ENCODE measurements at regions of chr3 and their contacts with region 1.

Region 1: DNA sequence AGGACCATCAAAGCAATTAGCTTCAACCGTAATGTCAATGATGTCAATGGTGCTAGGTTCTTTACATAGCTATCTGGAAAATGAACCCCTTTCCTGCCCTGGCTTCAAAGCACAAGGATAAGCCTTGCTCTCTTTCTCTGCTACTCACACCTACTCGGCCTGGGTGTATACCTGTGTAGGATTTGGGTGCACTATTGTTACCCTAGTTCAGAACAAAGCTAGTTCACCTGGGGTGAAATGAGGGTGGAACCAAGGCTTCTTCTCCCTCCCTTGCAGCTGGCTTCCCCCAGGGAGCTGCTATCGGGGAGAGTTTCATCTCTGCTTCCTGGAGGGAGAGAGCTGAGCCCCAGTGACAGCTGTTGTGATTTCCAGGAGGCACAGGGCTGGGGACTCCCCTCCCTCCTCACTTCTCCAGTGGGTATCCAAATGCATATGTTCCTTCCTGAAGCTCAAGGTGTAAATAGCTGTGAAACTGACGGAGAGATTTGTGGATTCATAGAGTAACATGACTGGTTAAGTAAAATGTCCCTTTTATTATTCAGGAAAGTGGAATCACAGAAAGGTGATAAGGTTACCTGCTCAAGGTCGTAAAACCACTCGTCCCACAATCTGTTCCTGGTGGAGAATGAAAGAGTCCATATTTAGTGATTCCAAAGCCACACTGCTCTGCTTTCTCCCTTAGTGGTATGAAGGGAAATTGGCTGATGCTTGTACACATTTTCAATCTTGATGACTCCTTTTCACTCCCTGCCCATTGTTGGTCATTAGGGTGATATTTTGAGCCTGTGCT is 11.8 kb upstream of the C3orf70 start:
- DNase-seq: no peak
- ATAC-seq: no peak
- H3K4me3 ChIP-seq: no peak overlapping the region
- H3K27ac ChIP-seq: no peak overlapping the region
- H3K4me1 ChIP-seq: no peaks in the 10 kb centered on the region
- H3K27me3 ChIP-seq: peaks cover 11 to 37% of the 10 kb centered on the region in 2 experiments
- CTCF ChIP-seq: no peak
- EP300 ChIP-seq: no peak
- POLR2A ChIP-seq: no peak
- RAD21 ChIP-seq: no peak

Region 2: GRCh38 chr3:185114756-185115155 is 49.9 kb before region 1 on chr3:
- CTCF ChIA-PET with region 1: no interaction called
- POLR2A ChIA-PET with region 1: no interaction called
- in situ Hi-C with region 1: no loop called
- intact Hi-C with region 1: no loop called
- DNase-seq: no peak
- ATAC-seq: no peak
- H3K4me3 ChIP-seq: no peak overlapping the region
- H3K27ac ChIP-seq: no peak overlapping the region
- H3K4me1 ChIP-seq: no peaks in the 10 kb centered on the region
- H3K27me3 ChIP-seq: peaks cover 8 to 11% of the 10 kb centered on the region in 2 experiments; a peak in 3 of 5 replicates
- CTCF ChIP-seq: no peak
- EP300 ChIP-seq: no peak
- POLR2A ChIP-seq: no peak
- RAD21 ChIP-seq: no peak

Region 3: DNA sequence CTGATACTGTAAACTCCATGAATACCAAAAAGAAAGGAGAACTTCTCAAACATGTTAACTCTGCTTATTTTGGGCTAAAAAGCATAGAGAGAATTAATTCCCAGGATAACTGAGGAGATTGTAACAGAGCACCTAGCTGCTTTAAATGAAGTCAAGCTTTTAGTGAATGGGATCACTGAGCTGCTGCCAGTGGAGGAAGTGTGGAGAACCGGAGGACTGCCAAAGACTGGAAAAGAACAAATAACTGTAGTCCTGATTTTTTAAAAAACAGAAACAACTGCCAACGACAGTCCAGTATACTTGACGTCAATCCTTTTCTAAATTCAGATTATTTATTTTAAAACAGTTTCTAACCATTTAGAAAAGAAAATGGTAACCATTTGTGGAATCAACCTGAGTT is 15.0 kb before region 1 on chr3:
- CTCF ChIA-PET with region 1: no interaction called
- POLR2A ChIA-PET with region 1: interaction called, 11 read pairs
- in situ Hi-C with region 1: no loop called
- intact Hi-C with region 1: no loop called
- DNase-seq: no peak
- ATAC-seq: no peak
- H3K4me3 ChIP-seq: no peak overlapping the region
- H3K27ac ChIP-seq: no peak overlapping the region
- H3K4me1 ChIP-seq: peaks cover 0 to 14% of the 10 kb centered on the region in 2 experiments; a peak in 3 of 5 replicates
- H3K27me3 ChIP-seq: peaks cover 24 to 28% of the 10 kb centered on the region in 2 experiments; a peak in 4 of 5 replicates
- CTCF ChIP-seq: no peak
- EP300 ChIP-seq: no peak
- POLR2A ChIP-seq: no peak
- RAD21 ChIP-seq: no peak

Measured in K562 (cell line).